Spleen (tissue), 13 donors: ENCODE measurements at regions of chr16 and their contacts with region 1.

Region 1: DNA sequence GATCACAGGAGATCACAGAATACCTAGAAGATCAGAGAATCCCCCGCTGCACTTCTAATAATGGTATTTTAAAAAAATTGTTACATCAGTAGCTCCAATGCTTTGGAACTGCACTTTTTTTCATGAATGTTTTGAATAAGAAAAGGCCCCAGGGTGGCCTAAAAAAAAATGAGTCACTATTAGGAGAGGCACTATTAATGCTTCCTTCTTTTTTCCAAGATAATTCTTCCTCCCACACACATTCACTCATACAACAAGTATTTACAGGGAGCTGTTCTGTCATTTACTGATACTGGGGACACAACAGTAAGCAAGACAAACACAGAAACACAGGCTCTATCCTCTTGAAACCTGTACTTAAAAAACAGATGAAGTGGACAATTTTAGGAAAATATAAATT is 675 bp upstream of the PDZD9 start:
- DNase-seq: no peak
- H3K4me3 ChIP-seq: no peak overlapping the region
- H3K27ac ChIP-seq: no peak overlapping the region
- H3K4me1 ChIP-seq: peaks cover under 1 to 33% (median 11%) of the 10 kb centered on the region in 6 donors
- H3K27me3 ChIP-seq: no peaks in the 10 kb centered on the region
- CTCF ChIP-seq: no peak
- POLR2A ChIP-seq: no peak

Region 2: DNA sequence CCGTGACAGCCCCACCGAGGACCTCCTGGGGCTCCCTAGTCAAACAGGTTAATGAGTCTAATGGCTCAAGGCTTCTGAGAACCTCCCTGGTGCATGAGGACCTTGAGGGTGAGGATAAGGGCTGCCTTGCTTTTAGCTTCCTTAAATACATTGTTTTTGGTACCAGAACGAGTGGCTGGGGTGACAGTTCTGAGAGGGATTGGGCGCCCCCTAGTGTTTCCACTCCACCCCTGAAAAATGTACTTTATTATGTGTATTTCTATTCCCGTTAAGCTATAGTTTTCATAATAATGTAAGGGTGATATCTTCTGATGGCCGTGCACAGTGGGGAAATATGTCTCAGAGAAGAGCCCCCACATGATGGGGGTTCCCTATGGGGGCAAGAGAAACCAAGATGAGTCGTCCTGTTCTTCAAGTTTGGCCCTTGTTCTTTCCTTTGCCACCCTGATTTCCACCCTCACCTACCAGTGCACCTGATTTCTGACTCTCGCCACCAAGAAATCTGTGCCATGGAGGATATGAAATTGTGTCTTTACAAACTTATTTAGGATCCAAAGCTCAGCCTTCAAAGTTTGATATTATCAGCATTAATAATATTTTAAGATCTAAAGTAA is 76.2 kb after region 1 on chr16:
- intact Hi-C with region 1: loop called (anchors 5 kb)
- DNase-seq: peak; percentile 81
- H3K4me3 ChIP-seq: no peak overlapping the region
- H3K27ac ChIP-seq: no peak overlapping the region
- H3K4me1 ChIP-seq: peaks cover 0 to 13% (median 0%) of the 10 kb centered on the region in 6 donors
- H3K27me3 ChIP-seq: no peaks in the 10 kb centered on the region
- CTCF ChIP-seq: peak; percentile 25 to 80 (median 67)
- POLR2A ChIP-seq: no peak

Region 3: GRCh38 chr16:22188595-22189442 is 187.2 kb after region 1 on chr16:
- intact Hi-C with region 1: loop called (anchors 5 kb)
- DNase-seq: peak; percentile 83
- H3K4me3 ChIP-seq: peak overlapping the region in 4 of 8 donors; percentile 67 to 93 (median 77)
- H3K27ac ChIP-seq: peak overlapping the region; percentile 92 to 100 (median 96)
- H3K4me1 ChIP-seq: peaks cover 29 to 48% (median 42%) of the 10 kb centered on the region in 6 donors
- H3K27me3 ChIP-seq: no peaks in the 10 kb centered on the region
- CTCF ChIP-seq: peak; percentile 74 to 88 (median 80)
- POLR2A ChIP-seq: no peak

Region 4: DNA sequence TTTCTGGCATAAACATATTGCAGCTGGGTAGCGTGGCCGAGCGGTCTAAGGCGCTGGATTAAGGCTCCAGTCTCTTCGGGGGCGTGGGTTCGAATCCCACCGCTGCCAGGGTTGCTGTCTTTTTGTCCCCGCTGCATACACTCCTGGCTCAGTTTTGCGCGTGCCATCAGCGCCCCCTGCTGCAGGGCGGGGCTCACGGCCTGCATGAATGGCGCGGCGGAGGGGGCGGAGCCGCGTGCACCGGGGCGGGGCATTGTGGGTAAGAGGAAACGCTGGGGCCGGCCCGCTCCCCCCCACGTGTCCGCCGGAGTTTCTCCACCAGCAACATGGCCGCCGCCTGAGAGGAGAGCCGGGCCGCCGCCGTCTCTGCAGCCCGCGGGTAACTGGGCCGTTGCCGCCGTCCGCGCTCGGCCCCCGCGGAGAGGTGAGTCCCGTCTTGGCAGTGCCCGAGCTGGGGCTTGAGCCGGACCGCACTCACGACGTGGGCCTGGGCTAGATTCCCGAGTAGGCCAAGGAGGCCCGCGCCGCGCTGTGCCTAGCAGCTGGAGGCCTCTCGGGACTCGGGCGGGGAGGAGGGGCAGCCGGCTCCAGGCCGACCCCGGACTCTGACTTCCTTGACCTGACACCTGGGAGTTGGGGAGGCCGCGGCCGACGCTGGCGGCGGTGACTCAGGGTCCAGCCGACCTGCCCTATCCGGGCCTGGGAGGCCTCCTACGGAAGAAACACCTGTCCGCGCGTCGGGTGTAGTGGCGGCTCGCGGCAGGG is 295.7 kb after region 1 on chr16 and contains the start of gene POLR3E:
- intact Hi-C with region 1: loop called (anchors 5 kb)
- DNase-seq: peak; percentile 100
- H3K4me3 ChIP-seq: peak within 1 kb of the TSS; percentile 68 to 98 (median 93)
- H3K27ac ChIP-seq: peak within 1 kb of the TSS; percentile 78 to 93 (median 90)
- H3K4me1 ChIP-seq: peaks cover 12 to 54% (median 40%) of the 10 kb centered on the region in 6 donors
- H3K27me3 ChIP-seq: no peaks in the 10 kb centered on the region
- CTCF ChIP-seq: peak; percentile 97 to 100 (median 99)
- POLR2A ChIP-seq: peak in 1 of 3 donors; percentile 44
- total RNA-seq, gene POLR3E: 40.4 to 58.0 (median 52.2) TPM